GM10248 (cell line): ENCODE measurements at regions of chr6 and their contacts with region 1.

Region 1: GRCh38 chr6:44002593-44003344 is 124.5 kb downstream of the MRPL14 start:
- DNase-seq: peak; percentile 81
- CTCF ChIP-seq: peak; percentile 19

Region 2: DNA sequence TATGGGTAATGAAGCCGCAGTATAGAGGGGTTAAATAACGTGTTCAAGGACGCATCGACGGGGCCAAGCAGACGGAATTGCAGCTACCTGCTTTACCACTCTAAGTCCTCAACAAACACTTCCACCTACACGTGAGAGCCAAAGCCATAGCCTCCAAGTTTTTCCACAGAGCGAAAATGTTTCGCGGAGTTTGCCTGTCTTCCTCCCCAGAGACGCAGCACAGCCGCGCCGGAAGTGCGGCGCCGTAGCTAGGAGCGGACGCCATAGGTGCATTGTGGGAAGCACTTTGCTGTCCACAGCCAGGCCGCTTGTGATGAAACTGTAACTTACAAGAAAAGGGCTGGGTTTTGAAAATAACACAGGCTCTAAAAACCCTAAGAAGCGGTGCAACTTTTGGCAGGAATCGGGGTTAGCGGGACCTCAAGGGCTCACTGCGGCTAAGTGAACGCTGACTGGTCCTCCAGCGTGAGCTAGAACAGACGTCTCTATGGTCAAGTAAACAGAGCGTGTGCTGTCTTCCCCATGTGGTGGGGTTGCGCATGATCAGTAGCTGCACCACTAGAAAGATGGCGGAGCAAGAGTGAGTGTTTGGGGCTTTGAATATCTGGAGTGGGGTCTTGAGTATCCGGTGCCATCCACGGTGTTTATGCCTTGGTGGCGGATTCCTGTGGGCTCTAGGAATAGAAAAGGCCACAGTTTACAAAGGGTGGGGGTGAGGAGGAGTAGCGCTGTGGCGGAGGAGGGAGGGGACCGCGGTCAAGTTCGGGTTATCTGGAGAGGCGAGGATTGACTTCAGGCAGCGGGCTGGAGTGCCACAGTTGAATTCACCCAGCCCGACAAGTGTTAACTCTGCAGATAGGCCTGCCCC is 1123.2 kb before region 1 on chr6 and contains the start of gene RPL7L1:
- CTCF ChIA-PET with region 1: no interaction called
- POLR2A ChIA-PET with region 1: no interaction called
- DNase-seq: peak; percentile 83
- CTCF ChIP-seq: no peak

Region 3: GRCh38 chr6:44016131-44016870 is 13.5 kb after region 1 on chr6:
- CTCF ChIA-PET with region 1: interaction called, 23 read pairs
- POLR2A ChIA-PET with region 1: no interaction called
- DNase-seq: no peak
- CTCF ChIP-seq: no peak